Dorsolateral prefrontal cortex (tissue), 120 donors: ENCODE measurements at regions of chr17 and their contacts with region 1.

Region 1: GRCh38 chr17:82320956-82321927 is 3.8 kb upstream of the CD7 start:
- DNase-seq: peak in 2 of 10 donors; percentile 27 to 61
- H3K4me3 ChIP-seq: peak overlapping the region in 19 of 59 donors; percentile 10 to 45 (median 30)
- H3K27ac ChIP-seq: no peak overlapping the region
- H3K27me3 ChIP-seq: peaks cover 0 to 23% (median 0%) of the 10 kb centered on the region in 45 donors
- CTCF ChIP-seq: peak; percentile 48 to 97 (median 85)

Region 2: GRCh38 chr17:82153745-82154375 is 167.4 kb before region 1 on chr17:
- intact Hi-C with region 1: no loop called
- DNase-seq: peak; percentile 73 to 85 (median 78)
- H3K4me3 ChIP-seq: no peak overlapping the region
- H3K27ac ChIP-seq: peak overlapping the region in 2 of 59 donors; percentile 14 to 74
- H3K27me3 ChIP-seq: no peaks in the 10 kb centered on the region
- CTCF ChIP-seq: peak; percentile 51 to 99 (median 94)

Region 3: GRCh38 chr17:82244413-82245140 is 76.7 kb before region 1 on chr17:
- intact Hi-C with region 1: loop called (anchors 2 to 5 kb)
- DNase-seq: peak in 9 of 10 donors; percentile 53 to 79 (median 72)
- H3K4me3 ChIP-seq: peak overlapping the region in 1 of 59 donors; percentile 15
- H3K27ac ChIP-seq: peak overlapping the region in 53 of 59 donors; percentile 0 to 90 (median 69)
- H3K27me3 ChIP-seq: no peaks in the 10 kb centered on the region
- CTCF ChIP-seq: peak in 55 of 56 donors; percentile 35 to 86 (median 70)

Region 4: DNA sequence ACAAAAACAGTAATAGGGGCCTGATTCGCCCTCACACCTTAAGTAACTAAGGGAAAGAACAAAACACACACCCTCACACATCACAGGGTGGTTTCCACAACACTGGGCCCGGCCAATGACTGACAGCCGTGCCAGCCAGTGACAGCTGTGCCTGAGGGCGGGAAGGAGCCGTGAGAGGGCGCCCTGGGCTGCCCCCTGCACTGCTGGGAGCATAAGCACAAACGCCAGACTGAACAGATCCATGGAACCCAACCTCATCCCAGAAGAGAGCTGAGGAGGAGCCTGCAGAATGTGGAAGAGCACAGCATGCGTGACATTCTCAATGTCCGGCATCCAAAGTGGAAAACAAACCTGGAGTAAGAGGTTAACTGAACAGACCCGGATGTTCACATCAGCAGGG is 63.8 kb before region 1 on chr17:
- intact Hi-C with region 1: no loop called
- DNase-seq: peak; percentile 54 to 85 (median 75)
- H3K4me3 ChIP-seq: peak overlapping the region in 2 of 59 donors; percentile 4 to 5
- H3K27ac ChIP-seq: peak overlapping the region in 52 of 59 donors; percentile 4 to 81 (median 54)
- H3K27me3 ChIP-seq: no peaks in the 10 kb centered on the region
- CTCF ChIP-seq: peak in 41 of 56 donors; percentile 10 to 68 (median 42)

Region 5: GRCh38 chr17:82300707-82301270 is 20.5 kb before region 1 on chr17:
- intact Hi-C with region 1: no loop called
- DNase-seq: peak in 5 of 10 donors; percentile 30 to 69 (median 37)
- H3K4me3 ChIP-seq: no peak overlapping the region
- H3K27ac ChIP-seq: no peak overlapping the region
- H3K27me3 ChIP-seq: no peaks in the 10 kb centered on the region
- CTCF ChIP-seq: peak in 54 of 56 donors; percentile 32 to 71 (median 58)

Region 6: GRCh38 chr17:82380860-82381702 is 59.8 kb after region 1 on chr17:
- intact Hi-C with region 1: no loop called
- DNase-seq: peak in 1 of 10 donors; percentile 31
- H3K4me3 ChIP-seq: peak overlapping the region in 12 of 59 donors; percentile 8 to 38 (median 22)
- H3K27ac ChIP-seq: peak overlapping the region in 25 of 59 donors; percentile 0 to 63 (median 36)
- H3K27me3 ChIP-seq: peaks cover 0 to 47% (median 11%) of the 10 kb centered on the region in 45 donors
- CTCF ChIP-seq: no peak